Activated CD8-positive, alpha-beta memory T cell treated with anti-CD3 and anti-CD28 coated beads, Interleukin-2, amount 10 ng/mL, durations not matched to agents 7 days and 5 days (primary cell): ENCODE measurements at regions of chr2 and their contacts with region 1.

Region 1: GRCh38 chr2:101349893-101350662 is 37.2 kb downstream of the CREG2 start:
- DNase-seq: no peak
- ATAC-seq: no peak
- H3K4me3 Mint-ChIP-seq: no peak overlapping the region
- H3K27ac Mint-ChIP-seq: no peak overlapping the region
- H3K4me1 Mint-ChIP-seq: peaks cover 5% of the 10 kb centered on the region
- H3K27me3 Mint-ChIP-seq: peaks cover 7% of the 10 kb centered on the region

Region 2: DNA sequence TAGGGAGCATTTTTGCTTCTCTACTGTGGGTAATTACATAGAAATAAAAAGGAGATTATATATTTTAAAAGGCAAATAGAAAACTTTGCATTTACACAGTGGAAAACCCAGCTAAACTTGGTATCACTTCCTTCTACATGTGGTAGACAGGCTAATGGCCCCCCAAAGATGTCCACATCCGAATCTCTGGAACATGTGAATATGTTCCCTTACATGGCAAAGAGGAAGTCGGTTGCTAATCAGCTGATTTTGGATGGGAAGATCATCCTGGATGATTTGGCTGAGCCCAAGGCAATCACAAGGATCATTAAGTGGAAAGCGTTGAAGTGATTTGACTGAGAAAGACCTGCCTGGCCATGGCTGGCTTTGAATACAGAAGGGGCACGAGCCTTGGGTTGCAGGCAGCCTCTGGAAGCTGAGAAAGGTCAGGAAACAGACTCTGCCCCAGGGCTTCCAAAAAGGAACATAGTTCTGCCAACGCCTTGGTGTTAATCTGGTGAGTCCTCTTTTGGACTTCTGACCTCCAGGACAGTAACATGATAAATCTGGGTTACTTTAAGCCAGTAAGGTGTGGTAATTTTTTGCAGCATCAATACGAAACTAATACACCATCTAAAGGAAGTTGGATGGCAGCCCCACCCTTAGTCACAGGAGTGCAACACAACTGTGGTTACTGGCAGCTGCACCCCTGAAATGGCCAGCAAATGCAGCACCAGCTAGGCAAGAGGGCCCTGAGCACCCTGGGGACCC is 11.2 kb after region 1 on chr2:
- CTCF ChIA-PET with region 1: interaction called, 15 read pairs
- DNase-seq: peak; percentile 82
- ATAC-seq: peak; percentile 92
- H3K4me3 Mint-ChIP-seq: peak overlapping the region; percentile 3
- H3K27ac Mint-ChIP-seq: peak overlapping the region; percentile 69
- H3K4me1 Mint-ChIP-seq: peaks cover 28% of the 10 kb centered on the region
- H3K27me3 Mint-ChIP-seq: no peaks in the 10 kb centered on the region

Region 3: DNA sequence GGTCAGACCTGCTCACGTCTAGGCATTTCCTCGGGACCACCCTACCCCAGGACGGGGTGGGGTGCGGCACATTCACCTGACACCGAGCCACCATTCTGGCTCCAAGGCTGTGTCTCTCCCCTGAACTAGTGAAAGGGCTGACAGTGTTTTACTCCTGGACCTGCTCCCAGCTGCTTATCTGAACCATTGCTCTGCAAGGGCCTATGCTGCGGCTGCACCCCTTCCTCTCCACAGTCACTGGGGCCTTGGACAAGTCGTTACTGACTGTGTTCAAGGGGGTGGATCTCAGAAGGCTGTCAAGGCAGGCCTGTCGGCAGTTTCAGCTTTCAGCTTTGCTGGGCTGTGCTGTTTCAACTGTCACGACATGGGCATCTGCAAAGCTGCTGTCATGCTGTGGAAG is 25.6 kb after region 1 on chr2:
- CTCF ChIA-PET with region 1: no interaction called
- DNase-seq: no peak
- ATAC-seq: no peak
- H3K4me3 Mint-ChIP-seq: no peak overlapping the region
- H3K27ac Mint-ChIP-seq: no peak overlapping the region
- H3K4me1 Mint-ChIP-seq: no peaks in the 10 kb centered on the region
- H3K27me3 Mint-ChIP-seq: peaks cover 12% of the 10 kb centered on the region